Aorta (tissue), 5 donors: ENCODE measurements at regions of chr2 and their contacts with region 1.

Region 1: DNA sequence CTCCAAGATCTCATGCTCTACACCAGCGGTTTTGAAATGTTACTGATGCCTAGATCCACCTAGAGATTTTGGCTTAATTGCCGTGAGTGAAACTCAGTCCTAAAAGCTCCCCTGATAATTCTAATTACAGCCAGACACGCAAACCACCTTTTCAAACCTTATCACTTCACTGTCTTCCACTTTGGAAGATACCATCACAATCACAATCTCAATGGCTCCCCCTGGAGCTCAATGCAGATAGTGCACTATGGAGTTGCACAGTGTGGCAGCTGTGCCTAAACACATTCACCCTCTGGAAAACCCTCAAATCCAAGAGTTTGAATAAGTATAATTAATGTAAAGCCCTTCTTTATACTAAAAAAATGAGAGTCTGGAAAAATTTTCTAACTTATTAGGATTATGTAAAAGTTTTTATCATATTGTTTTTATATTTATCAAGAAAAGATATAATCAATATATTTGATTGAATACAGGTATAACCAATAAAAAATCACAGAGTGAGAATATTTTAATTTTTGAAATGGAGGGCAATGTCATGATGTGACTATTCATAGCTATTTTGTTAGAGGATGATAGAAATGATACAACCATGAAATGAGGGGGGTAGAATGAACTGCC is 102.9 kb upstream of the SLC8A1 start:
- DNase-seq: peak; percentile 70 to 74
- ATAC-seq: peak; percentile 85
- H3K4me3 ChIP-seq: no peak overlapping the region
- H3K27ac ChIP-seq: no peak overlapping the region
- H3K4me1 ChIP-seq: no peaks in the 10 kb centered on the region
- H3K27me3 ChIP-seq: no peaks in the 10 kb centered on the region

Region 2: DNA sequence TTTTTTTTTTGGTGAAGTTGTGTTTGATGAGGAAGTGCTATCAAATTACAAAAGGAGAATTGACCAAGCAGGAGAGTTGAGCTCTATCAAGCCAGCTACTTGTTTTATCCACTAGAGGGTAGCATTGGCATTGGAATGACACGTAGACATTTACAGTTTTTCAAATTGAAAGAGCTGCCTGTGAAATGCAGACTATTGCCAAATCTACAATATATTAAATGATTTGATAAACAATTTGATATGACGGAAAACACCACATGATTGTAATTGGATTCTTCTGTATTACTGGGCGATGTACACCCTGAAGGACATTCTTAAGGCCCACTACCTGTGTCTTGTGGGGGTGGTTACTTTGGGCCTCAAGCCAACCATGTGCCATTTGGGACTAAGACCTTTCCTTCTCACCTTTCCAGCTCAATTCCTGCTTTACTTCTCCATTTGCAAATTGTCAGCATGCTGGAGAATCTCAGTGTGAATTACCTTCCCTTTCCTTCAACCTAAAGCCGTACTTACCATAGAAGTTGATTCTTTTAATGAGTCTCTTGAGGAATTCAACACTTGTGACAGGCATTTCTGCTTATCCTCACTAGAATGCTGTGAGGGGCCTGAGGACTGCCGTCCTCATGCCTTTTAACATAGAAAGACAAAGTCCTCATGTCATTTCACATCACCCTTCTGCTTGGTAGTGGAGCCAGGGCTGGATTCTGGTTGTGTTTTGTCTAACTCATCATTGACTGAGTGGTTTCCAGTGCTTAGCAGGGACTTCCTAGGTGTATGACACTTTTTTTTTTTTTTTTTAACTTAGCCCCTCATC is 640.9 kb before region 1 on chr2:
- intact Hi-C with region 1: loop called (anchors 2 to 5 kb)
- DNase-seq: no peak
- ATAC-seq: no peak
- H3K4me3 ChIP-seq: no peak overlapping the region
- H3K27ac ChIP-seq: no peak overlapping the region
- H3K4me1 ChIP-seq: no peaks in the 10 kb centered on the region
- H3K27me3 ChIP-seq: no peaks in the 10 kb centered on the region

Region 3: DNA sequence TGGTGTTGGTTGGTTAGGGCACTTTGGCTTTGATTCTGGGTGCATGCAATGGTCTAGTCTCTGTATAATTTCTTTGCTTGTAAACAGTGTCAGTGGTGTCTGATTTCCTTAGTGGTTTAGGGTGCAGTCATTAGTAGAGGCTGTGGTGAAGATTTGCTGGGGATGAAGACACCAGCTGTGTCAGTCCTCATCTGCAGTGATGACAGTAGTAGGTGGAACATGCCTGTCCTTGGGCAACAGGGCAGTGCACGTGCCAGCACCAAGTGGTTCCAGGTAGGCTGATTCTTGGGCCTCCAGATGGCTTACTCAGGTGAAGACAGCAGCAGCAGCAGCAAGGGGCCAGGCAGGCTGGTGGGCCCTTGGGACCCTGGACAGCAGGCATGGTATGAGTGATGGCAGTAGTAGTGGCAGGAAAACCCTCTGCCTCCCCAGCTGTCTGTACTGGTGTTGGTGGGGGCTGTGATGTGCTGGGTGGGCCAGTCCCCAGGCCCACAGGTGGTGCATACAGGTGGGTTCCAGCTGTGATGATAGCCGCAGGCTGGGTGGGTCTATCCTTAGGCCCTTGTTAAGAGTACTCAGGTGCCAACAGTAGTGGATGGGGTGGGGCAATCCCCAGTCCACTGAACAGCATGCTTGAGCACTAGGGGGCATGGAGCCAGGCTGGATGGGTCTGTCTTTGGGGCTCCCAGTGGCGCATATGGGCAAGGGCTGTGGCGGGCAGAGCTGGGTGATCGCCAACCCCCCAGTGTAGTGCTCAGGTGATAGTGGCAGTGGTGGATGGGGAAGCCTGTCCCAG is 635.1 kb before region 1 on chr2:
- intact Hi-C with region 1: loop called in 1 of 2 experiments (anchors 5 kb)
- DNase-seq: no peak
- ATAC-seq: no peak
- H3K4me3 ChIP-seq: no peak overlapping the region
- H3K27ac ChIP-seq: no peak overlapping the region
- H3K4me1 ChIP-seq: no peaks in the 10 kb centered on the region
- H3K27me3 ChIP-seq: no peaks in the 10 kb centered on the region

Region 4: DNA sequence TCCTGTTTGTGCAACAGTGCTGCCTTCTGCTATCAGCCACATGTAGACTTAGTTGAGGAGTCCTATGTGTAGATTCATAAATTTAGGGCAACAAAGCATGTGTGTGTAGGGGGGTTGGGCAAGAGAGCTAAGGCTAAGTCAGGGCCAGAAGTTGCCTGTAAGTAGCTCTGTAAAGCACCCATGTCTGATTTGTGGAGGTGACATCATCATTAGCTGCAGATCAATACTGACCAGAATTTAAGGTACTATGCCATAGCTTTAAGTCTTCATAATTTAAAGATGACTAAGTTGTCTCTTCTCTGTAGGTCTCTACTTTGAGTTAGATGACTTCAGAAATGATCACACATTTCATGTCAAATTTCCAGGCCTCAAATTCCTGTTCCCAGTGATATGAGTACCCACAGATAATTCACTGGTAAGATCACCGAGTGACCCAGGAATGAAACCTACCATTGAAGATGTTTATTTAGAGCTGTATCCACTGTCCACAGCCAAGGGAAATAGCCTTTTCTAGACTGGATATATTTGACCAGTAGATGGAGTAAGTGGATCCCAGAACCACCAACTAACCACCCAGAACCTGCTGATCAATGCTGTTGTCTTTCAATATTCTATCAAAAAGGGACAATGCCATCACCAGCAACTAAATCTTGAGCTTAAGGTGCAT is 341.8 kb before region 1 on chr2:
- intact Hi-C with region 1: loop called in 1 of 2 experiments (anchors 5 kb)
- DNase-seq: no peak
- ATAC-seq: peak; percentile 69
- H3K4me3 ChIP-seq: no peak overlapping the region
- H3K27ac ChIP-seq: no peak overlapping the region
- H3K4me1 ChIP-seq: no peaks in the 10 kb centered on the region
- H3K27me3 ChIP-seq: no peaks in the 10 kb centered on the region

Region 5: DNA sequence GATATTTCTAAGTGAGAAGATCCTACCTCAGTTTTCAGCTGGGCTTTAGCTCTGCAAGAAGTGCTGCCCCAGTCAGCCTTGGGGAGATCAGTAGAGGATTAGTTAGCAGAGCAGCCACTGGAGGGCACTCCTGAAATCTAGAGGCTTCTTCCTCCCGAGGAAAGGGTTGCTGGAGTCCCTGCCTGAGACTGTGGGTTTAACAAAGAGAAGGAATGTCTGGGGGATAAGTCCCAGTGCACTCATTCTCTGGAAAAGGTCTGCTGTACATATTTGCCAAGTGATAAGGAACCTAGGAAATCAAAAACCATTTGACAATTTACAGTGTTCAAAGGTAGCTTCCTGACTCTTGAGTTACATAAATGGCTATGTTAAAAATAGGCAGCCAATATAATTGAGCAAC is 310.1 kb before region 1 on chr2:
- intact Hi-C with region 1: loop called in 1 of 2 experiments (anchors 10 kb)
- DNase-seq: peak; percentile 71 to 72
- ATAC-seq: peak; percentile 71
- H3K4me3 ChIP-seq: no peak overlapping the region
- H3K27ac ChIP-seq: peak overlapping the region in 1 of 2 donors; percentile 5
- H3K4me1 ChIP-seq: peaks cover 0 to 8% of the 10 kb centered on the region in 2 donors
- H3K27me3 ChIP-seq: no peaks in the 10 kb centered on the region

Region 6: GRCh38 chr2:41782306-41783158 is 1227.8 kb after region 1 on chr2:
- intact Hi-C with region 1: loop called in 1 of 2 experiments (anchors 10 kb)
- DNase-seq: no peak
- ATAC-seq: no peak
- H3K4me3 ChIP-seq: no peak overlapping the region
- H3K27ac ChIP-seq: no peak overlapping the region
- H3K4me1 ChIP-seq: peaks cover 0 to 2% of the 10 kb centered on the region in 2 donors
- H3K27me3 ChIP-seq: no peaks in the 10 kb centered on the region